Activated CD4-positive, alpha-beta T cell treated with anti-CD3 and anti-CD28 coated beads for 36 hours (primary cell): ENCODE measurements at regions of chr14 and their contacts with region 1.

Region 1: DNA sequence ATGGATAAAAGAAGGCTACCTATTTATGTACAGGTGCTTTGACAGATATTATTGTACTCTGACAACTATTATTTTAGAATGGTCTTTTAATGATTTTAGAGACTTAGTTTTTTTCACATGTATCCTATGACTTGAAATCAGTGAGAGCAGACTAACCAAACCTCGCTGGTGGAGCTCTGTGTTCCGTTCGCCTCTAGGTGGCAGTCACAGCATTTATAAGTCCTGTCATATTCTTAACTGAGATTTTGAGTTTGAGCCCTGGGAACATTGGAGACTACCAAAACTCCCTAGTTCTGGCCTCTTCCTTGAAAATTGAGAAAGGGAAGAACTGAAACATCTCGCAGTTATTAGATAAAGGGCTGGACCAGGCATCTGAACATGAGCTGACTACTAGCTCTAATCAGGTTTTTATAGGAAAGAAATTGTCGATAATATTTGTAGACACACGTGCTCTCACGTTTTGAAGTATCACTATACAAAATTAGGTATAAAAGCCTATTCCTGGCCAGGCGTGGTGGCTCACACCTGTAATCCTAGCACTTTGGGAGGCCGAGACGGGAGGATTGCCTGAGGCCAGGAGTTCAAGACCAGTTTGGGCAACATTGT is 48.3 kb downstream of the TTLL5 start:
- DNase-seq: peak; percentile 77
- ATAC-seq: peak; percentile 67
- H3K4me3 Mint-ChIP-seq: no peak overlapping the region
- H3K27ac Mint-ChIP-seq: no peak overlapping the region
- H3K4me1 Mint-ChIP-seq: peaks cover 4% of the 10 kb centered on the region
- H3K27me3 Mint-ChIP-seq: no peaks in the 10 kb centered on the region

Region 2: GRCh38 chr14:75720842-75721498 is 11.7 kb after region 1 on chr14:
- CTCF ChIA-PET with region 1: interaction called, 13 read pairs
- POLR2A ChIA-PET with region 1: no interaction called
- intact Hi-C with region 1: no loop called
- DNase-seq: no peak
- ATAC-seq: no peak
- H3K4me3 Mint-ChIP-seq: no peak overlapping the region
- H3K27ac Mint-ChIP-seq: no peak overlapping the region
- H3K4me1 Mint-ChIP-seq: peaks cover 10% of the 10 kb centered on the region
- H3K27me3 Mint-ChIP-seq: no peaks in the 10 kb centered on the region

Region 3: DNA sequence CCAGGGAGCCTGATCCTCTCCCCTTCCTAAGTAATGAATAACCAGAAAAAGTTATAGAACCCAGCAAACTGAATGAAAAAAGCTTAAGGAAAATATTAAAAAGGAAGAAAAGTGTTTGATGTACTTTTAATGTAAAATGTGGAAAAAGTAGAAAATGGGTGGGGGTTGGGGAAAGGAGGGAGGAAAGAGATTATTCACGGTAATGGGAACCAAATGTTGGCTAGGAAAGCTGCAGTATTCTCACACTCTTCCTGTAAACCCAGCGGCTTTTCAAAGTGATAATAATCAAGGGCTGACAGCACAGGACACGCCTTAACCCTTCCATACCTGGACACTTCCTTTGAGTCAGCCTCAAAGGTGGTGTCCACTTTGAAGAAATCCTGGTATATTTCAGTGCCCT is 133.2 kb after region 1 on chr14:
- CTCF ChIA-PET with region 1: no interaction called
- POLR2A ChIA-PET with region 1: no interaction called
- intact Hi-C with region 1: no loop called
- DNase-seq: no peak
- ATAC-seq: no peak
- H3K4me3 Mint-ChIP-seq: no peak overlapping the region
- H3K27ac Mint-ChIP-seq: no peak overlapping the region
- H3K4me1 Mint-ChIP-seq: no peaks in the 10 kb centered on the region
- H3K27me3 Mint-ChIP-seq: no peaks in the 10 kb centered on the region

Region 4: GRCh38 chr14:75906676-75907280 is 197.5 kb after region 1 on chr14:
- CTCF ChIA-PET with region 1: interaction called, 18 read pairs
- POLR2A ChIA-PET with region 1: no interaction called
- intact Hi-C with region 1: loop called in 1 of 2 experiments (anchors 1 kb)
- DNase-seq: peak; percentile 83
- ATAC-seq: no peak
- H3K4me3 Mint-ChIP-seq: no peak overlapping the region
- H3K27ac Mint-ChIP-seq: no peak overlapping the region
- H3K4me1 Mint-ChIP-seq: no peaks in the 10 kb centered on the region
- H3K27me3 Mint-ChIP-seq: no peaks in the 10 kb centered on the region

Region 5: DNA sequence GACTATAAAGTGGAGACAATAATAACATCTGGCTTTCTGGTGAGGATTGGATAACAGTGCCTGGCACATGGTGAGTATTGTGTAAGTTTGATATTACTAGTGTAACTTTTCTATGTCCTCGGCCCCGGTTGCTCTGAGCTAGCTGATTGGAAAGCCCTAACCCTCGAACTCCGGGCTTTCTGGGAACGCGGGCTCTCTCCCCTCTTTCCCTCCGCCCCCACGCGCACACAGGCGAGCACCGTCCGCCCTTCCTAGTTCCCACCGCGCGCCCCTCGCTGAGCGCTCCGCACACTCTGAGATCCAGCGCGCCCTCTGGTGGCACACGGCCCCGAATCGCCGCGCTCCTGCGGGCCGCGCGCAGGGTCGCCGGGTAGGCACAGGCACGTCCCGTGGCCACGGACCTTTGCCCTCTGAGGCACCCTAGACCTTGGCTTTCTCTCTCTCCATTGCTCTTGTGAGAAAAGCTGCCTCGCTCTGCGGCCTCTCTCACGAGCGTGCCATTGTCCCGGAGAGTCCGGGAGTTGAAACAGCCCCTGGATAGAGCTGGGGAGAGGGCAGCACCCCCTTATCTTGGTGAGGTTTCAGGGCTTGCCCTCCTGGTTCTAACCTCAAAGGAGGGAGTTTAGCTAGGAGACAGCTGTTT is 643.5 kb after region 1 on chr14:
- CTCF ChIA-PET with region 1: interaction called, 5 read pairs
- POLR2A ChIA-PET with region 1: no interaction called
- intact Hi-C with region 1: loop called in 1 of 2 experiments (anchors 1 kb)
- DNase-seq: peak; percentile 78
- ATAC-seq: peak; percentile 92
- H3K4me3 Mint-ChIP-seq: no peak overlapping the region
- H3K27ac Mint-ChIP-seq: no peak overlapping the region
- H3K4me1 Mint-ChIP-seq: no peaks in the 10 kb centered on the region
- H3K27me3 Mint-ChIP-seq: peaks cover 14% of the 10 kb centered on the region